PC-9 (cell line): ENCODE measurements at regions of chr19 and their contacts with region 1.

Region 1: DNA sequence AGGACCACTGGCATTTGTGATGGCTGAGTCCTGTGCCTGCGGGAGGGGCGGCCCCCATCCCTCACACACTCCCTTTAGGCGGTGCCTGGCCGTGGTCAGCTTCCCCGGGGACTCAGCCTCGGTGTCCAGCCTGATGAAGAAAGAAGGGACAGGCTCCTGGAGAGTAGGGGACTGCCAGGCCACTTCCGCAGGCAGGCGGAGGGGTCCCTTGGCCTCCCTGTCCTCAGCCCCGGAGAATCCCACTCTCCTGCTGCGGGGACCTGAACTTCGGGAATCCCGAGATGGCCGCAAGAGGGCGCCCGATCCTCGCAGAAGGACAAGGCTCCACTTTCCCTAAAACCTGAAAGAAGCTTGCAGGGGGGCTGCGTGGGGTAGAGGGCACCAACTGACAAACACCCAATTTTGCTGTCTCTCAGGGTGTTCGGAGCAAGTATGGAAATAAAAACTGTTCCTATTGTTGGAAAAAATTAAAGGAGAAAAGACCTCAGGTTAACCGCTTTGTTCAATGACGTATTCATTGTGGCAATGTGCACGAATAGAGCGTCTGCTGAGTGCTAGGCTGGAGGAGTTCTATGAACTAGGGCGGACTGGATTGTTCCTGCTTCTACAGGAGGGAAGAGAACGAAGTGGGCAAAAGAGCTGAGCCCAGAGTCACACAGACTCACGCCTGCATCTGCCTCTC is 297.3 kb downstream of the ZNF536 start:
- DNase-seq: peak in 1 of 2 experiments; percentile 28
- H3K4me3 ChIP-seq: no peak overlapping the region
- H3K27ac ChIP-seq: no peak overlapping the region
- H3K4me1 ChIP-seq: no peaks in the 10 kb centered on the region
- H3K27me3 ChIP-seq: peaks cover 60% of the 10 kb centered on the region
- CTCF ChIP-seq: peak; percentile 81

Region 2: DNA sequence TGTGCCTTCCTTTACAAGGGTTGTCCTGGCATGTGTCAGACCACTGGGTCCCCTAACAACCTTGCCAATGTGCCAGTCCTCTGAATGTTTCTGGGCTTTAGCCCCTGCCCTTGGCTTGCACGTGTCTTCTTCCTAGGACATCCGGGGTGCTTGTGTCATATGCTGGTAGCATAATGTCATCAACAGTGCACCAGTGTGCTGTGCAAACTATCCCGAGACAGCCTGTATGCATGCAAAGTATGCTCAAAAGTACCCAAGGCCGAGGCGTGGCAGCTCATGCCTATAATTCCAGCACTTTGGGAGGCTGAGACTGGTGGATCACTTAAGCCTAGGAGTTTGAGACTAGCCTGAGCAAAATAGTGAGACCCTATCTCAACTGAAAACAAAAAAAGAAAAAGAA is 933.7 kb before region 1 on chr19:
- CTCF ChIA-PET with region 1: no interaction called
- POLR2A ChIA-PET with region 1: no interaction called
- intact Hi-C with region 1: loop called (anchors 10 kb)
- DNase-seq: no peak
- H3K4me3 ChIP-seq: no peak overlapping the region
- H3K27ac ChIP-seq: no peak overlapping the region
- H3K4me1 ChIP-seq: no peaks in the 10 kb centered on the region
- H3K27me3 ChIP-seq: peaks cover 88% of the 10 kb centered on the region
- CTCF ChIP-seq: no peak

Region 3: GRCh38 chr19:31214086-31214485 is 544.6 kb after region 1 on chr19:
- CTCF ChIA-PET with region 1: no interaction called
- POLR2A ChIA-PET with region 1: no interaction called
- intact Hi-C with region 1: no loop called
- DNase-seq: peak; percentile 35 to 57
- H3K4me3 ChIP-seq: no peak overlapping the region
- H3K27ac ChIP-seq: no peak overlapping the region
- H3K4me1 ChIP-seq: no peaks in the 10 kb centered on the region
- H3K27me3 ChIP-seq: no peaks in the 10 kb centered on the region
- CTCF ChIP-seq: no peak